Posterior vena cava (tissue), 2 donors: ENCODE measurements at regions of chr22 and their contacts with region 1.

Region 1: GRCh38 chr22:39428578-39429071 is 28.2 kb upstream of the MGAT3 start:
- DNase-seq: peak; percentile 41

Region 2: DNA sequence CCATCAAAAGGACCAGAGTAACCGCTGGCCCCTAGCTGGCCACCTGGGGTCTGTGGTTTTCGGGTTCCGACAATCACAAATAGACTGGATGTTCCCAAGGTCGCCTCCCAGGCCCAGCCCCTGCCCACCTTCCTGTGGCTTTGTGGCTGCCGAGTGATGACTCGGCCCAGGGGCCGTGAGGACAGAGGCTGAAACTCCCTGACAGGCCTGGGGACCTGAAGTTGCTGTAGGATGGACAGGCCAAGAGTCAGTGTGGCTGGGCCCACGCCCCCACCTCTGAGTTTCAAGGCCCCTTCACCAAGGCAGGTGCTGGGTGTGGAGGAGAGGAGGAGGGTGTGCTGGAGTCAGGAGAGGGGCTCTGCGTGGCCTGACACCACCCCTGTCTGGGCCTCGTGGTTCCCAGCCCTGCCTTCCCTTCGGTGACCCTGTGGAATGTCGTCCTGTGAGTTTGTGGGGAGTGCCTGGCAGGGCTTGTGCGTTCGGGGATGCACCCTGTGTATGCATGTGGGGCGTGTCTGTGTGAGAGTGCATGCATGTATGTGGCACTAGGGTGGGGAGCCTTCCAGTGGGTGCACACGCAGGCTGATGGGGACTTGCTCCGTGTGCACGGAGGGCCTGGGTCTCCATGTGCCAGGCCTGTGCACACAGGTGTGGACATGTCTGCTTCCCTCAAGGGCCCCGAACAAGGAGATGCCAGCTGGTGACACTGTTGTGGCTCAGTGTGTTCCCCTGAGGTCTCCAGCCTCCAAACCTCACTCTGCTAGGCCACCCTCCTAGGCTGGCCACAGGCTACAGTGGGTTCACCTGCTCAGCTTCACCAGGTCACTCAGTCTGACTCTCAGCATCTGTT is 19.8 kb after region 1 on chr22:
- intact Hi-C with region 1: loop called in 1 of 2 experiments (anchors 1 kb)
- DNase-seq: no peak

Region 3: DNA sequence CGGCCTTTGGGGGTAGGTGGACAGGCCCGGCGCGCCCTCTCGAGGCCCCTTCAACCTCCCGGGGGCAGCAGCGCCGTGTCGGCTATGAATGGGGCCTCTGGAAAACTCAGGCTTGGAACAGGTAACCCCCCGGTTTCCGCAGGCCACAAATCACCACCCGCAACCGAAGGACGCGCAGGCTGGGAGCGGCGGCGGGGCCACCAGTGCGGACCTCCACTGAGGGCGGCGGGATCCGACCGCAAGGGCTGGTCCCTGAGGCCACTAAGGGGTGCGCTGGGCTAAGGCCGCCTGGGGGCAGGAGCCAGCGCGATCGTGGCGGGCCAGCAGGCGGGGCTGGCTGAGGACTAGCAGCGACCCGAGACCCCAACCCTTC is 91.0 kb after region 1 on chr22:
- intact Hi-C with region 1: loop called in 1 of 2 experiments (anchors 10 kb)
- DNase-seq: no peak